Activated naive CD4-positive, alpha-beta T cell treated with anti-CD3 and anti-CD28 coated beads for 36 hours (primary cell): ENCODE measurements at regions of chr10 and their contacts with region 1.

Region 1: DNA sequence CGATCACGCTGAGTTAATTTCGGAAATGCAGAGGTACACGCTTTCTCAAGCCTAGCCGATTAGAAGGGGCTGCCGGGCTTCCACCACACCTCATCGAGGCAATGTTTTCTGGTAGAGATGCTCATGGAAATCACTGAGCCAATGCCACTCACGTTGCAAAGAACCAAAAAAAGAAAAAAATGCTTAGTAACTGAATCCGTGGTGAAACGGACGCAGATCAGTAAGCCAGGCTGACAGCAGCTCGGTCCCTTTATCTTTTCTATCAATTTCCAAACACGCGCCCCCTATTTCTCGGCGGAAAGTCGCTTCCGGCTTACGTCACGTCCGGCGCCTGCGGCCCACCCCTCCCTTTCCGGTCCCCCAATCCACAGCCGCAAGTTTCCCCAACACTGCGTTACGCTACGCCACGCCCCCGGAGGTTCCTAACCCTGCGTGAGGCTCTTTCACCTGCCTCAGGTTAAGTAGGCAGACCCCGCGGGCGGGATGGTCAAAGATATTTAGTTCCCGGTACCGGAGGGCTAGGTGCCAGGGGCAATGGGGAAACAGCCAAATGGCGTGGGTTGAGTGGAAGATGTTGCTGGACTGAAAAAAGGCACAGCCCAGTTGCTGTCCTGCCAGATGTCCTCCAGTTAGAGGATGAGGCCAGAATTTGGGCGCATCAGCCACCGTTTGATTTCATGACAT is at the start of gene NSUN6:
- DNase-seq: peak; percentile 95
- H3K4me3 Mint-ChIP-seq: peak within 1 kb of the TSS; percentile 93
- H3K27ac Mint-ChIP-seq: peak within 1 kb of the TSS; percentile 94
- H3K4me1 Mint-ChIP-seq: peaks cover 28% of the 10 kb centered on the region
- H3K27me3 Mint-ChIP-seq: no peaks in the 10 kb centered on the region
- total RNA-seq, gene NSUN6: 9.8 to 11.1 TPM

Region 2: GRCh38 chr10:17200912-17201793 is 1450.3 kb before region 1 on chr10 and contains the start of gene TRDMT1:
- CTCF ChIA-PET with region 1: no interaction called
- intact Hi-C with region 1: loop called (anchors 5 kb)
- DNase-seq: peak; percentile 77
- H3K4me3 Mint-ChIP-seq: peak within 1 kb of the TSS; percentile 86
- H3K27ac Mint-ChIP-seq: peak within 1 kb of the TSS; percentile 92
- H3K4me1 Mint-ChIP-seq: peaks cover 35% of the 10 kb centered on the region
- H3K27me3 Mint-ChIP-seq: no peaks in the 10 kb centered on the region
- total RNA-seq, gene TRDMT1: 6.5 to 7.2 TPM

Region 3: GRCh38 chr10:18719811-18720210 is 68.3 kb after region 1 on chr10:
- CTCF ChIA-PET with region 1: no interaction called
- intact Hi-C with region 1: no loop called
- DNase-seq: no peak
- H3K4me3 Mint-ChIP-seq: no peak overlapping the region
- H3K27ac Mint-ChIP-seq: no peak overlapping the region
- H3K4me1 Mint-ChIP-seq: no peaks in the 10 kb centered on the region
- H3K27me3 Mint-ChIP-seq: no peaks in the 10 kb centered on the region